Caco-2 (cell line): ENCODE measurements at regions of chr10 and their contacts with region 1.

Region 1: DNA sequence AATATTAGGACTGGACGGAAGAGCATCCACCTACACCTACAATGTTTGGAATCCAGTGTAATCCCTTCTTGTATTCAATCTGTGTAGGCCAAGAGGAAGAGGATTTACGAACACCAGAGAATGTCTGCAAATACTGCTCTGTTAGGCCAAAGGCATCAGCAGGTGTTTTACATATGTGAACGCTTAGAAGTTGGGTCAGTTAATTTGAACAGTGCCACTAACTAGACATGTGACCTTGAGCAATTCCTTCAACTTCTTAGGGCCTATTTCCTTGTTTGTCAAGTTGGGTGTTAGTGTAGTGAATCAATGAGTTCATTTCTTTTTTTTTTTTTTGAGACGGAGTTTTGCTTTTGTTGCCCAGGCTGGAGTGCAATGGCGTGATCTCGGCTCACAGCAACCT is 35.4 kb downstream of the MYPN start:
- DNase-seq: peak in 1 of 2 experiments; percentile 63
- H3K4me3 ChIP-seq: no peak overlapping the region
- H3K4me3 Mint-ChIP-seq: no peak overlapping the region
- H3K27ac Mint-ChIP-seq: peak overlapping the region; percentile 61
- H3K4me1 ChIP-seq: peaks cover 21% of the 10 kb centered on the region
- H3K4me1 Mint-ChIP-seq: peaks cover 30% of the 10 kb centered on the region
- H3K27me3 ChIP-seq: no peaks in the 10 kb centered on the region
- H3K27me3 Mint-ChIP-seq: no peaks in the 10 kb centered on the region
- CTCF ChIP-seq: no peak

Region 2: DNA sequence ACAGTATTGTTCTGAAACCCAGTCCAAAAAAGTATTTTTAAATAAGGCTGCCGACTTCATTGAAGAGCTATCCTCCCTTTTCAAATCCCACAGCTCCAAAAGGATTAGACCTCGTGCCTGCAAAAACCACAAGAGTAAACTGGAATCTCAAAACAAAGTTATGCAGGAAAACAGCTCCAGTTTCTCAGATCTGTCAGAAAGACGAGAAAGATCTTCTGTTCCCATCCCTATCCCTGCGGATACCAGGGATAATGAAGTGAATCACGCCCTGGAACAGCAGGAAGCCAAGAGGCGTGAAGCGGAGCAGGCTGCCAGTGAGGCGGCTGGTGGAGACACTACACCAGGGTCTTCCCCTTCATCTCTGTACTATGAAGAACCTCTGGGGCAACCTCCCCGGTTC is 22.9 kb before region 1 on chr10:
- CTCF ChIA-PET with region 1: no interaction called
- POLR2A ChIA-PET with region 1: no interaction called
- intact Hi-C with region 1: loop called (anchors 1 kb)
- DNase-seq: no peak
- H3K4me3 ChIP-seq: no peak overlapping the region
- H3K4me3 Mint-ChIP-seq: no peak overlapping the region
- H3K27ac Mint-ChIP-seq: no peak overlapping the region
- H3K4me1 ChIP-seq: peaks cover 22% of the 10 kb centered on the region
- H3K4me1 Mint-ChIP-seq: peaks cover 13% of the 10 kb centered on the region
- H3K27me3 ChIP-seq: no peaks in the 10 kb centered on the region
- H3K27me3 Mint-ChIP-seq: peaks cover 2% of the 10 kb centered on the region
- CTCF ChIP-seq: no peak